Natural killer cell (primary cell): ENCODE measurements at regions of chr19 and their contacts with region 1.

Region 1: DNA sequence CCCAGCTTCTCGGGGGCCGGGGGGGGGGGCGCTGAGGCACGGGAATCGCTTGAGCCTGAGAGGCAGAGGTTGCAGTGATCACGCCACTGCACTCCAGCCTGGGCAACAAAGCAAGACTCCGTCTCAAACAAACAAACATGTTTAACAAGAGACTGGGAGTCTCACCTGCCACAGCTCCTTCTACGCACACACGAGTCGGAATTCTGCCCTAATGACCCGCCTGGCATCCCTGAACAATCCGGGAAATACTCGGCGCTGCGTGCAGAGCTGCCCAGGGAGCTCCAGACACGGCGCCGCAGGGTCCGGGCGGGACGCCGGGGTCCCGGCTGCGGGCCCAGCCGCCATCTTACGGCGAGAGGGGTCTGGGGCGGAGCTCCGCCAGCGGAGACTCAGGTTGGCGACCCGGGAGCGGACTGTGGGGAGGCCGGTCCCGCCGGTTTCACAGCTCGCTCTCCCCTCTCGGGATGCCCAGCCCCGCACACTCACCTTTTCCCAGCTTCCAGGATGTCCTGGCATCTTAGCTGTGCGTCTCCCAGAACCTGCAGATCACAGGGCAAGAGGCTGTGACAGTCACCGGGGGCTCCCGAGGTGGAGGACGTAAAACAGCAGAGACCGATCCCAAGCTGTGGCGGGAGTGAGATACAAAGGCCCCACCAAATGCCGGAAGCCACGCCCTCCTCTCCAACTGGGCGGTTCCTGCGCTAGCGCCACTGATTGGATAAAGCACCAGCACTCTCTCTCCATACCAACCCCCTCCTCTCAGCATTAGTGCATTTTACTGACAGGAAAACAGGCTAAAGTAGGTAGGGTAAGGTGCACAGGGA is 23.6 kb upstream of the ZNF724 start:
- DNase-seq: peak; percentile 88 to 94
- ATAC-seq: peak; percentile 98 to 100 (median 98)
- H3K4me3 ChIP-seq: peak overlapping the region; percentile 81
- H3K4me3 Mint-ChIP-seq: peak overlapping the region; percentile 97
- H3K27ac ChIP-seq: peak overlapping the region; percentile 72
- H3K27ac Mint-ChIP-seq: peak overlapping the region; percentile 86 to 91
- H3K4me1 ChIP-seq: peaks cover 8% of the 10 kb centered on the region
- H3K4me1 Mint-ChIP-seq: peaks cover 26% of the 10 kb centered on the region in 2 donors
- H3K27me3 ChIP-seq: no peaks in the 10 kb centered on the region
- H3K27me3 Mint-ChIP-seq: no peaks in the 10 kb centered on the region
- CTCF ChIP-seq: no peak

Region 2: DNA sequence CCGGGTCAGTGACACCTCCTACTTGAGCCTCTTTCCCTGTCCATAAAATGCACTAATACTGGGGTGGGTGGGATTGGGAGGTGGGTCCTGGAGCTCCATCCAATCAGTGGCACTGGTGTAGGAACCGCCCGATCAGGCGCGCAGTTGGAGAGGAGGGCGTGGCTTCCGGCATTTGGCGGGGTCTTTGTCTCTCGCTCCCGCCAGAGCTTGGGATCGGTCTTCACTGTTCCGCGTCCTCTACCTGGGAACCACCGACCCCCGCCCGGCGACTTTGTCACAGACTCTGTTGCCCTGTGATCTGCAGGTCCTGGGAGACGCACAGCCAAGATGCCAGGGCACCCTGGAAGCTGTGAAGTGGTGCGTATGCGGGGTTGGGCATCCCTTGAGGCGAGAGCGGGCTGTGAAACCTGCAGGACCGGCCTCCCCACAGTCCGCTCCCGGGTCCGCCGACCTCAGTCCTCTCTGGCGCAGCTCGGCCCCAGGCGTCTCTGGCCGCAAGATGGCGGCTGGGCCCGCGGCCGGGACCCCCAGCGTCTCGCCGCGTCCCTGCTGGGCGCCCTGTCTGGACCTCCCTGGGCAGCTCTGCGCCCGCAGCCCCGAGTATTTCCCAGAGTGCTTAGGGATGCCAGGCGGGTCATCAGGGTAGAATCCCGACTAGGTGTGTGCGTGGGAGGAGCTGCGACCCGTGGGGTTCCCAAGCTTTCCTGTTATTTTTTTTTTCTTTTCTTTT is 198.6 kb before region 1 on chr19:
- intact Hi-C with region 1: no loop called
- DNase-seq: no peak
- ATAC-seq: peak in 2 of 3 donors; percentile 38 to 54
- H3K4me3 ChIP-seq: peak overlapping the region; percentile 27
- H3K4me3 Mint-ChIP-seq: peak overlapping the region; percentile 81
- H3K27ac ChIP-seq: no peak overlapping the region
- H3K27ac Mint-ChIP-seq: no peak overlapping the region
- H3K4me1 ChIP-seq: peaks cover 16% of the 10 kb centered on the region
- H3K4me1 Mint-ChIP-seq: peaks cover 11 to 24% of the 10 kb centered on the region in 2 donors
- H3K27me3 ChIP-seq: peaks cover 9% of the 10 kb centered on the region
- H3K27me3 Mint-ChIP-seq: peaks cover 17 to 22% of the 10 kb centered on the region in 2 donors
- CTCF ChIP-seq: no peak

Region 3: GRCh38 chr19:23249911-23250649 is 23.7 kb before region 1 on chr19 and contains the start of gene ZNF724:
- intact Hi-C with region 1: loop called (anchors 1 kb)
- DNase-seq: peak; percentile 85 to 94
- ATAC-seq: peak; percentile 98 to 100 (median 98)
- H3K4me3 ChIP-seq: peak within 1 kb of the TSS; percentile 60
- H3K4me3 Mint-ChIP-seq: peak within 1 kb of the TSS; percentile 98
- H3K27ac ChIP-seq: peak within 1 kb of the TSS; percentile 59
- H3K27ac Mint-ChIP-seq: peak within 1 kb of the TSS; percentile 87 to 93
- H3K4me1 ChIP-seq: peaks cover 12% of the 10 kb centered on the region
- H3K4me1 Mint-ChIP-seq: peaks cover 11 to 14% of the 10 kb centered on the region in 2 donors
- H3K27me3 ChIP-seq: no peaks in the 10 kb centered on the region
- H3K27me3 Mint-ChIP-seq: no peaks in the 10 kb centered on the region
- CTCF ChIP-seq: no peak
- total RNA-seq, gene ZNF724: 4.5 to 5.8 (median 4.9) TPM